ENCODE measurements at regions of chr11 and their contacts with region 1.

Region 1: GRCh38 chr11:66136752-66137123 is 66.7 kb downstream of the PACS1 start:
- DNase-seq: peak; percentile 58
- ATAC-seq: no peak
- H3K4me3 Mint-ChIP-seq: no peak overlapping the region
- H3K27ac Mint-ChIP-seq: peak overlapping the region; percentile 62
- H3K4me1 Mint-ChIP-seq: peaks cover 62% of the 10 kb centered on the region
- H3K27me3 Mint-ChIP-seq: no peaks in the 10 kb centered on the region
- CTCF ChIP-seq: no peak

Region 2: GRCh38 chr11:66081505-66081904 is 55.2 kb before region 1 on chr11:
- CTCF ChIA-PET with region 1: interaction called, 13 read pairs
- POLR2A ChIA-PET with region 1: interaction called, 3 read pairs
- intact Hi-C with region 1: no loop called
- DNase-seq: peak; percentile 89
- ATAC-seq: peak; percentile 83
- H3K4me3 Mint-ChIP-seq: peak overlapping the region; percentile 75
- H3K27ac Mint-ChIP-seq: peak overlapping the region; percentile 99
- H3K4me1 Mint-ChIP-seq: peaks cover 89% of the 10 kb centered on the region
- H3K27me3 Mint-ChIP-seq: no peaks in the 10 kb centered on the region
- CTCF ChIP-seq: no peak

Region 3: DNA sequence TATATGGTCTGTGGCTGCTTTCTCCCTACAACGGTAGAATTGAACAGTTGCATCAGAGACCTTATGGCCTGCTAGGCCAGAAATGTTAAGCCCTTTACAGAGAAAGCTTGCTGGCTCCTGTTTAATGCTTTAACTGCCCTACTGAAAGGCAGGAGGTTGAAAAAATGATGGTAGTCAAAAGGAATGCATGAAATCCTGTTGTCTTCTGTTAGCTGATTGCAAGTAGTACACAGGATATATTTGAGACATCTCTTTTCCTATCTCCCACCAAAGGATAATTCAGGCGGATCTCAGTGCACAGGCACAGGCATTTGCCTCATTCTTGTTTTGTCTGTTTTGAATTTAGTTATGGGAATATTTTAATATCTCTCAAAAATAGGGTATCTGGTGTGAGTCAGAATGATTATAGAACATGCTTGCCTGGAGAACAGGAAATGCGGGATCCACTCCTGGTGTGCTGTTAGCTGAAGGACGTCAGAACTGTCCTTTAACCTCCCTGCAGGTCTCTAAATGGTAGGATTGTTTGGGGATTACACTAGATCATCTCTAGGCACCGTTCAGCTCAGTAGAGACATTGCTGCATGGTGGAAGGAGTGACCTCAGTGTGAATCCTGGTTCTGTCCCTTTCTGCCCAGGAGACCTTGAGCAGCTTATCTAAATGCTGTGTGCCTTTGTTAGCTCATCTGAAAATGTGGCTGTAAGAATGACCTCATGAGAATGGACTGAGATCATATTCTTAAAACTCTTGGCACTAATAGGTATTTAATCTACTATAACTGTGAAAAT is 17.2 kb before region 1 on chr11:
- CTCF ChIA-PET with region 1: interaction called, 10 read pairs
- POLR2A ChIA-PET with region 1: interaction called, 6 read pairs
- intact Hi-C with region 1: no loop called
- DNase-seq: no peak
- ATAC-seq: no peak
- H3K4me3 Mint-ChIP-seq: no peak overlapping the region
- H3K27ac Mint-ChIP-seq: peak overlapping the region; percentile 69
- H3K4me1 Mint-ChIP-seq: peaks cover 83% of the 10 kb centered on the region
- H3K27me3 Mint-ChIP-seq: no peaks in the 10 kb centered on the region
- CTCF ChIP-seq: no peak

Measured in activated CD8-positive, alpha-beta T cell treated with anti-CD3 and anti-CD28 coated beads for 36 hours (primary cell).